ENCODE measurements at regions of chr17 and their contacts with region 1.

Region 1: GRCh38 chr17:10618202-10618635 is 38.9 kb downstream of the MYH3 start:
- DNase-seq: peak; percentile 68
- ATAC-seq: peak; percentile 90
- H3K4me3 ChIP-seq: no peak overlapping the region
- H3K27ac ChIP-seq: no peak overlapping the region
- H3K4me1 ChIP-seq: peaks cover 0 to 10% of the 10 kb centered on the region in 2 experiments; a peak in 2 of 4 replicates
- H3K27me3 ChIP-seq: no peaks in the 10 kb centered on the region
- CTCF ChIP-seq: peak; percentile 83 to 94 (median 93)
- POLR2A ChIP-seq: no peak
- RAD21 ChIP-seq: peak; percentile 85

Region 2: DNA sequence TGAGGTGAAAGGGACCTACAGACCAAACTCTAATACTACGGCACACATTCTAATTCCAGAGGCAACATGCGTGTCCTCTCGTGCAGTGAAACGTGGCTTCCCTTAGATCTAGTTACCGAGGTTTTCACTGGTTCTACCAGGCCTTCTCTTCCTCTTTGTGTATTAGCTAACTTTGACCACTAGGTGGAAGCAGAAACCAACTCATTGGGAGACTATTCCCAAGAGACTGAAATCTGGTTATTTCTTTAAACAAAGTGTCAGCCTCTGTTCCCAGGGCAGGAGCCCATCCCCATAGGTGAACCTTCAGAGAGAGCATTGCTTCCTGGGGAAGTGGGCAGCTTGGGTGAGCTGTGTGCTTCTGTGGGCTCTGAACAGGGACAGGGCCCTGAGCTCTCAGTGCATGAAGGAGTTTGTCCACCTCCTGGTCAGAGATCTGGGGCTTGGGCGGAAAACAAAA is 693.5 kb before region 1 on chr17:
- CTCF ChIA-PET with region 1: interaction called, 15 read pairs
- POLR2A ChIA-PET with region 1: no interaction called
- RAD21 ChIA-PET with region 1: interaction called in 1 of 2 experiments, 3 read pairs
- intact Hi-C with region 1: loop called (anchors 5 kb)
- DNase-seq: peak; percentile 81
- ATAC-seq: peak; percentile 80
- H3K4me3 ChIP-seq: no peak overlapping the region
- H3K27ac ChIP-seq: no peak overlapping the region
- H3K4me1 ChIP-seq: peaks cover 6 to 21% of the 10 kb centered on the region in 2 experiments
- H3K27me3 ChIP-seq: 0 out of 2 replicates have a peak, but pooled peaks cover 1% of the 10 kb centered on the region
- CTCF ChIP-seq: peak; percentile 78 to 86 (median 80)
- POLR2A ChIP-seq: no peak
- RAD21 ChIP-seq: peak; percentile 88

Region 3: DNA sequence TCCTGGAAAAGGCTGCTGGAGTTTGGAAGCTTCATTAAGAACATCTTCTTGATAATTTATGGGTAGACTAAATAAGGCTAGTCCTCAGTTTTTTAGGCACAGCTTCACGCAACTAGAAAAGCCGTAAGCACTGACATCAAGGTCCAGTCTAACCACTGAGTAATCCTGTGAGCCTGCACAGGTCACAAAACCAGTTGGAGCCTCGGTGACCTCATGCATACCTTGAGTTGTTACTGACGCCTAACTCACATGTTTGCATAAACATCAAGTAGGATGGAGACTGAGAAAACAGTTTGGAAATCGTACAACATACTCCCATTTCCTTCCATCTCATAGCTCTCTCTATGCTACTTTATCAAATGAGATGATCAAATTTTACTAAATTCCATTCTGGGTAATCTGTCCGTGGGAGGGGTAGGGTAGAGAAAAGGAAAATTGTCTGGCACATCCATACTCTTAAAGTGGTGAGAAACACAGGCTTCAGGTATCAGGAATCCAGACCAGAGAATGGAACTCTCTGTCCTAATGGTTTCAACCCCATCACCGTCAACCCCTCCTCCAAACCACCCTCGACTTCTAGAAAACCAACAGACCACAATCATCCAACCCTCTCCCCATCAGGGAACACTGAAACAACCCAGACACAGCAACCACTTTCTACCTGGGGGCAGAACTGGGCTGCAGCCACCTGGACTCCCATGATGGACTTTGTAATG is 649.2 kb before region 1 on chr17:
- CTCF ChIA-PET with region 1: interaction called, 7 read pairs
- POLR2A ChIA-PET with region 1: no interaction called
- RAD21 ChIA-PET with region 1: no interaction called
- intact Hi-C with region 1: loop called (anchors 5 kb)
- DNase-seq: no peak
- ATAC-seq: no peak
- H3K4me3 ChIP-seq: no peak overlapping the region
- H3K27ac ChIP-seq: no peak overlapping the region
- H3K4me1 ChIP-seq: peaks cover 8 to 9% of the 10 kb centered on the region in 2 experiments
- H3K27me3 ChIP-seq: no peaks in the 10 kb centered on the region
- CTCF ChIP-seq: no peak
- POLR2A ChIP-seq: no peak
- RAD21 ChIP-seq: no peak

Region 4: GRCh38 chr17:10295728-10296343 is 322.4 kb before region 1 on chr17:
- CTCF ChIA-PET with region 1: interaction called, 84 read pairs
- POLR2A ChIA-PET with region 1: no interaction called
- RAD21 ChIA-PET with region 1: interaction called, 5 to 7 read pairs
- intact Hi-C with region 1: loop called (anchors 1 kb)
- DNase-seq: peak; percentile 65
- ATAC-seq: peak; percentile 77
- H3K4me3 ChIP-seq: no peak overlapping the region
- H3K27ac ChIP-seq: no peak overlapping the region
- H3K4me1 ChIP-seq: peaks cover 2 to 25% of the 10 kb centered on the region in 2 experiments; a peak in 3 of 4 replicates
- H3K27me3 ChIP-seq: no peaks in the 10 kb centered on the region
- CTCF ChIP-seq: peak; percentile 72 to 89 (median 80); a peak in 5 of 6 replicates
- POLR2A ChIP-seq: no peak
- RAD21 ChIP-seq: peak; percentile 85

Region 5: DNA sequence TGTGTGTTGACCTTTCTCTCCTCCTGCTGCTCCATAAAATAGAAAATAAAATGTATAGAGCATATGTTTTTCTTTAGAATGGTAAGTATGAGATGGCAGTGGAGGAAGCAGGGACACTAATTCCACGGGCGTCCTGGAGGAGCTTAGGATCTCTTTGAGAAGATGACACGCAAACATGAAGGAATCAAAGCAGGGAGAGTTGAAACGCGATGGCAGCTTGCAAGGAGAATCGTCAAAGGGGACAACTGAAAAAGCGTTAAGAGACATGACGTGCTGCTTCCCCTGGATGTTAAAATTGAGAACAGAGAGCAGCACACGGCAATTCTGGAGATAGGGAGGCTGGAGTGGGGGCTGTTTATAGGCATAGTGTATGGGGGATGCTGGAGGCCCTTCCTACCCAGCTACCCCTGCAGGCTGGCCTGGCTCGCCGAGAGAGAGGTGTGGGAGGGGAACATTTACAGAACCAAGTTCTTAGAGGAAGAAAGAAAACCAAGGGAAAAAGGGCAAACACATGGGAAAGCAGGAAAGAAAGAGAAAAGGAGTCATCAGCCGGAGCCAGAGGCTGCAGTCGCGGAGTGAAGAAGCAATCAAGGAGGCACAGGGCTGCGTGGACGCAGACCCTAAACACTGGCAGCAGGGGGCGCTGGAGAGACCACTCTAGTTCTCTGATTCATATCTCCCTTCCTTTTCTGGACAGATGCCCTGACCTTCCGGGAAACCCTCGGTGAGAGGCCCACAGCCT is 301.2 kb before region 1 on chr17:
- CTCF ChIA-PET with region 1: interaction called, 27 read pairs
- POLR2A ChIA-PET with region 1: no interaction called
- RAD21 ChIA-PET with region 1: no interaction called
- intact Hi-C with region 1: no loop called
- DNase-seq: peak; percentile 31
- ATAC-seq: peak; percentile 95
- H3K4me3 ChIP-seq: no peak overlapping the region
- H3K27ac ChIP-seq: no peak overlapping the region
- H3K4me1 ChIP-seq: peaks cover 0 to 3% of the 10 kb centered on the region in 2 experiments; a peak in 1 of 4 replicates
- H3K27me3 ChIP-seq: no peaks in the 10 kb centered on the region
- CTCF ChIP-seq: peak; percentile 25 to 83 (median 72); a peak in 5 of 6 replicates
- POLR2A ChIP-seq: no peak
- RAD21 ChIP-seq: no peak

Region 6: GRCh38 chr17:10327640-10328039 is 290.6 kb before region 1 on chr17:
- CTCF ChIA-PET with region 1: interaction called, 131 read pairs
- POLR2A ChIA-PET with region 1: interaction called, 3 read pairs
- RAD21 ChIA-PET with region 1: interaction called, 4 to 6 read pairs
- intact Hi-C with region 1: loop called (anchors 1 kb)
- DNase-seq: peak; percentile 78
- ATAC-seq: peak; percentile 95
- H3K4me3 ChIP-seq: no peak overlapping the region
- H3K27ac ChIP-seq: no peak overlapping the region
- H3K4me1 ChIP-seq: no peaks in the 10 kb centered on the region
- H3K27me3 ChIP-seq: no peaks in the 10 kb centered on the region
- CTCF ChIP-seq: peak; percentile 87 to 91 (median 90)
- POLR2A ChIP-seq: no peak
- RAD21 ChIP-seq: peak; percentile 90

Region 7: GRCh38 chr17:10527419-10527818 is 90.8 kb before region 1 on chr17:
- CTCF ChIA-PET with region 1: no interaction called
- POLR2A ChIA-PET with region 1: no interaction called
- RAD21 ChIA-PET with region 1: no interaction called
- intact Hi-C with region 1: no loop called
- DNase-seq: no peak
- ATAC-seq: no peak
- H3K4me3 ChIP-seq: no peak overlapping the region
- H3K27ac ChIP-seq: no peak overlapping the region
- H3K4me1 ChIP-seq: no peaks in the 10 kb centered on the region
- H3K27me3 ChIP-seq: peaks cover 4% of the 10 kb centered on the region
- CTCF ChIP-seq: no peak
- POLR2A ChIP-seq: no peak
- RAD21 ChIP-seq: no peak

Region 8: GRCh38 chr17:10563991-10564660 is 54.1 kb before region 1 on chr17:
- CTCF ChIA-PET with region 1: no interaction called
- POLR2A ChIA-PET with region 1: no interaction called
- RAD21 ChIA-PET with region 1: no interaction called
- intact Hi-C with region 1: no loop called
- DNase-seq: no peak
- ATAC-seq: no peak
- H3K4me3 ChIP-seq: no peak overlapping the region
- H3K27ac ChIP-seq: no peak overlapping the region
- H3K4me1 ChIP-seq: no peaks in the 10 kb centered on the region
- H3K27me3 ChIP-seq: peaks cover 17% of the 10 kb centered on the region
- CTCF ChIP-seq: no peak
- POLR2A ChIP-seq: no peak
- RAD21 ChIP-seq: no peak

Region 9: GRCh38 chr17:10631048-10631700 is 13.0 kb after region 1 on chr17:
- CTCF ChIA-PET with region 1: interaction called, 45 read pairs
- POLR2A ChIA-PET with region 1: no interaction called
- RAD21 ChIA-PET with region 1: no interaction called
- intact Hi-C with region 1: no loop called
- DNase-seq: no peak
- ATAC-seq: peak; percentile 90
- H3K4me3 ChIP-seq: no peak overlapping the region
- H3K27ac ChIP-seq: no peak overlapping the region
- H3K4me1 ChIP-seq: no peaks in the 10 kb centered on the region
- H3K27me3 ChIP-seq: no peaks in the 10 kb centered on the region
- CTCF ChIP-seq: peak; percentile 34 to 95 (median 94); a peak in 5 of 6 replicates
- POLR2A ChIP-seq: no peak
- RAD21 ChIP-seq: peak; percentile 57

Measured in HCT116 (cell line).